ENCODE measurements at regions of chr13 and their contacts with region 1.

Region 1: DNA sequence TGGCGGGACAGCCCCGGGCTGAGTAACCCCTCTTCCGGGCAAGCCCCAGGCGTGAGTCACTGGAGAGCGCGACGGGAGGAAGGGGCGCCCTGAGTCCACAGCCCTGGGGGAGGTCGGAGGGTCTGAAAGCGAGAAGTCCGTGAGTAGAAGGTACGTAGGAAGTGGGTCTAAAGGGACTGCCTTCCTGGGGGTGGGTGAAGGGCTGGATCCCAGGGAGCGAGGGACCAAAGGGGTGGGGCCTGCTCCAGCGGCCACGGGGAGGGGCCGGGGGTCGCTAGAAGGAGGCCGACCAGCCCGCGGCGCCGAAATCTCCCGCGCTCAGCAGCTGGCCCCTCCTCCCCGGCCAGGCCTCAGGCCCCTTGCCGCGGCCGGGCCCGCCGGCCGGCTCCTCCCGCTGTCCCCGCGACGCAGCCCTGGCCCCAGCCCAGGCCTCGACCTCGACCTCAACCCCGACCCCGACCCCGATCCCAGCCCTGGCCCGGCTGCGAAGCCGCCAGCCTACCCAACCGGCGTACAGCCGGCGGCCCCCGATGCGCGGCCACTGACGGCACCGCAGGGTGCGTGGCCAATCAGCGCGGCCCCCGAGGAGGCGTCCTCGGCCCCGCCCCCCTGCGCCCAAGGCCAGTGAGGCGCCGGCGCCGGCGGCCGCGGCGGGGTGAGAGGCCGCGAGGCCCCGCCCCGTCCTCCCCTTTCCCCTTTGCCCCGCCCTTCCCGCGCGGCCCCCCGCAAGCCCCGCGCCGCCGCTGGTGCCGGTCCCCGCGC is 22.6 kb downstream of the IPO5 start:
- DNase-seq: peak; percentile 29
- H3K4me3 ChIP-seq: peak overlapping the region; percentile 93
- H3K27ac ChIP-seq: peak overlapping the region; percentile 75
- H3K27me3 ChIP-seq: no peaks in the 10 kb centered on the region
- CTCF ChIP-seq: no peak

Region 2: GRCh38 chr13:97948041-97948440 is 28.0 kb before region 1 on chr13:
- CTCF ChIA-PET with region 1: interaction called, 12 read pairs
- POLR2A ChIA-PET with region 1: no interaction called
- DNase-seq: no peak
- H3K4me3 ChIP-seq: no peak overlapping the region
- H3K27ac ChIP-seq: peak overlapping the region; percentile 84
- H3K27me3 ChIP-seq: no peaks in the 10 kb centered on the region
- CTCF ChIP-seq: no peak